ENCODE measurements at regions of chr5 and their contacts with region 1.

Region 1: GRCh38 chr5:41843456-41844370 is 26.5 kb downstream of the OXCT1 start:
- H3K4me3 ChIP-seq: no peak overlapping the region
- H3K27ac ChIP-seq: no peak overlapping the region
- H3K4me1 ChIP-seq: no peaks in the 10 kb centered on the region
- CTCF ChIP-seq: peak; percentile 66

Region 2: GRCh38 chr5:41695920-41696582 is 147.7 kb before region 1 on chr5:
- CTCF ChIA-PET with region 1: interaction called, 29 read pairs
- POLR2A ChIA-PET with region 1: no interaction called
- H3K4me3 ChIP-seq: no peak overlapping the region
- H3K27ac ChIP-seq: no peak overlapping the region
- H3K4me1 ChIP-seq: no peaks in the 10 kb centered on the region
- CTCF ChIP-seq: no peak

Region 3: DNA sequence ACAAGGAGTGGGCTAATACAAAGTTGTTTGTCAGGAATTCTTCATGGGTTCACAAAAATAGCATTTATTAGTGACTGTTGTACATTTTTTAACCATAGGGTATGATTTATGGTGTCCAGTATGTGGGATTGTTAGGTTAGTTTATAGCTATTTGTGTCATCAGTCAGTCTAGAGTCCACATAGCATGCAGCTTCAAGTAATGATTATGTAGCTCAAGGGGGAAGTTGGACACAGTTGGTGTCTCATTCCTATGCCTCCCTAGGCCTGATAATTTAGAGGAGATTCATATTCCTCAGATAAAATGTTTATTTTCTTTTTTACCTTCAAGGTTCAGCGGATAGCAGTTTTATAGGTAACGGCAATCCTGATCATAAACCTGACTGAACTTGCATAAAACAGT is 127.3 kb before region 1 on chr5:
- CTCF ChIA-PET with region 1: interaction called, 17 read pairs
- POLR2A ChIA-PET with region 1: no interaction called
- H3K4me3 ChIP-seq: no peak overlapping the region
- H3K27ac ChIP-seq: no peak overlapping the region
- H3K4me1 ChIP-seq: no peaks in the 10 kb centered on the region
- CTCF ChIP-seq: no peak

Region 4: GRCh38 chr5:41822036-41822435 is 21.7 kb before region 1 on chr5:
- CTCF ChIA-PET with region 1: interaction called, 12 read pairs
- POLR2A ChIA-PET with region 1: no interaction called
- H3K4me3 ChIP-seq: no peak overlapping the region
- H3K27ac ChIP-seq: no peak overlapping the region
- H3K4me1 ChIP-seq: no peaks in the 10 kb centered on the region
- CTCF ChIP-seq: no peak